ENCODE measurements at regions of chr14 and their contacts with region 1.

Region 1: DNA sequence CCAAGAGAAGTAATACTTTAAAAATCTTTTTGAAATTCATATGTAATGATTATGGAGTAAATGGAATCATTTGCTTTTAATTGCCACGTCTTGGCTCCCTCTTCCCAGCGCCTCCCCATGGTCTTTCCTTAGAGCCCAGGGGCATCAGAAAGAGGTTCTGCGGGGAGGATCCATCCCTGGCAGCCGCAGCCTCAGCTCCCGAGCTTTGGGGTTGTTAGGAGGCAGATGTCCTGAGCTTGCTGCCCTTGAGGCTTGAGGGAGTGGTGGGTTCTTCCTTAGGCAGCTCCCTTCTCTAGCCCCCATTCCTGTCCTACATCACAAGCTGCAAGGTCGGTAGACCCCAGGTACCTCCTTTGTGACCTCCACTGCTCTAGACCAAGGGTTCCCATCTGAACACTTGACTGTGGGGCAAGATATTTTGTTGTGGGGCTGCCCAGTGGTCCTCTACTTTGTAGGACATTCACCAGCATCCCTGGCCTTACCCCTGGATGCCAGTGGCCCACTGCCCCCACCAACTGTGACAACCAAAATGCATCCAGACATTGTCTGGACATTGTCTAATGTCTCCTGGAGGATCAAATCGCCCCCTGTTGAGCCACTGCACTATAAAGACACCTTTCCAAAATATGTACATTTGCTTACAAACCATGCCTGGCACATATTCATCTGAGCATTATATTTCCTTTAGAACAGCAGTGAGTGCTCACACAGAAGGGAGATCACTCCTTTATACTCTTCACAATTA is 6.3 kb downstream of the PPP2R5C start:
- DNase-seq: no peak
- H3K4me3 Mint-ChIP-seq: no peak overlapping the region
- H3K27ac Mint-ChIP-seq: peak overlapping the region; percentile 33
- H3K4me1 Mint-ChIP-seq: peaks cover 21% of the 10 kb centered on the region
- H3K27me3 Mint-ChIP-seq: no peaks in the 10 kb centered on the region

Region 2: GRCh38 chr14:101669629-101670028 is 98.2 kb before region 1 on chr14:
- CTCF ChIA-PET with region 1: no interaction called
- DNase-seq: no peak
- H3K4me3 Mint-ChIP-seq: no peak overlapping the region
- H3K27ac Mint-ChIP-seq: no peak overlapping the region
- H3K4me1 Mint-ChIP-seq: no peaks in the 10 kb centered on the region
- H3K27me3 Mint-ChIP-seq: peaks cover 55% of the 10 kb centered on the region

Region 3: GRCh38 chr14:101695659-101696058 is 72.1 kb before region 1 on chr14:
- CTCF ChIA-PET with region 1: no interaction called
- DNase-seq: no peak
- H3K4me3 Mint-ChIP-seq: no peak overlapping the region
- H3K27ac Mint-ChIP-seq: no peak overlapping the region
- H3K4me1 Mint-ChIP-seq: no peaks in the 10 kb centered on the region
- H3K27me3 Mint-ChIP-seq: peaks cover 37% of the 10 kb centered on the region

Region 4: GRCh38 chr14:101809671-101810514 is 42.1 kb after region 1 on chr14:
- CTCF ChIA-PET with region 1: interaction called, 18 read pairs
- DNase-seq: peak; percentile 93
- H3K4me3 Mint-ChIP-seq: peak overlapping the region; percentile 90
- H3K27ac Mint-ChIP-seq: peak overlapping the region; percentile 99
- H3K4me1 Mint-ChIP-seq: peaks cover 54% of the 10 kb centered on the region
- H3K27me3 Mint-ChIP-seq: no peaks in the 10 kb centered on the region

Region 5: GRCh38 chr14:101843665-101844064 is 75.9 kb after region 1 on chr14:
- CTCF ChIA-PET with region 1: interaction called, 79 read pairs
- DNase-seq: peak; percentile 70
- H3K4me3 Mint-ChIP-seq: no peak overlapping the region
- H3K27ac Mint-ChIP-seq: peak overlapping the region; percentile 75
- H3K4me1 Mint-ChIP-seq: peaks cover 87% of the 10 kb centered on the region
- H3K27me3 Mint-ChIP-seq: no peaks in the 10 kb centered on the region

Region 6: GRCh38 chr14:101854366-101854765 is 86.6 kb after region 1 on chr14:
- CTCF ChIA-PET with region 1: interaction called, 18 read pairs
- DNase-seq: peak; percentile 38
- H3K4me3 Mint-ChIP-seq: no peak overlapping the region
- H3K27ac Mint-ChIP-seq: peak overlapping the region; percentile 33
- H3K4me1 Mint-ChIP-seq: peaks cover 77% of the 10 kb centered on the region
- H3K27me3 Mint-ChIP-seq: no peaks in the 10 kb centered on the region

Region 7: DNA sequence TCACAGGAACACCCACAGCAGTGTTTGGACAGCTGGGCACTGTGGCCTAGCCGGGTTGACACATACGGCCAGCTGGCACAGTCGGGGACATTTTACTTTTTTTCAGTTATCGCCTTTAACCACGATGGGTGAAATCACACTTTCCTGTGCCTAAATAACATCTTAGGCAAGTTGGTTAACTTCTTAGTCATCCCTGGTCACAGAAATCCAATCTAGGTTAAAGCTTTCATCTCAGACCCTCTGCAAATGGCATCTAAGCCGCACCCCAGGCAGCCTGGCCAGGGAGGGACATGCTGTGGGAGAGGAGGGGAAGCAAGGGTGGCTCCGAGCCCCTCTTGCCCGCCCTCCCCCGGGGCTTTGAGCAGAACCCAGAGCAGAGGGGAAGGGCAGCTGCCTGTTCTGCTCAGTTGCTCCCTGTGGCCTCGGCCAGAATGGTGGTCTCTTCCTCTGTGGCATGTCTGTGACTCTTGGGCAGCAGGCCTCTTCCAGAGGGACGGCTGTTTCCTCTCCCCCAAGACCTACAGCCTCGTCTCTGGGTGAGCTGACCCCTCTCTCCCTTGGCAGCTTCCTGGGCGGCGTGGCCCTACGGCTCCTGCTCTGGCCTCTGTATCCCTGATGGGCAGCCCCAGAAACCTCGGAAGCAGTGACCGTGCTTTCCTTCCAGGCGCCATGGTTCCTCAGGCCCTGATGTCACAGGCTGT is 111.2 kb after region 1 on chr14:
- CTCF ChIA-PET with region 1: interaction called, 15 read pairs
- DNase-seq: no peak
- H3K4me3 Mint-ChIP-seq: no peak overlapping the region
- H3K27ac Mint-ChIP-seq: no peak overlapping the region
- H3K4me1 Mint-ChIP-seq: peaks cover 49% of the 10 kb centered on the region
- H3K27me3 Mint-ChIP-seq: no peaks in the 10 kb centered on the region